A673 (cell line): ENCODE measurements at regions of chr3 and their contacts with region 1.

Region 1: GRCh38 chr3:129490242-129491045 is 38.0 kb upstream of the RHO start:
- DNase-seq: peak; percentile 87
- H3K4me3 ChIP-seq: no peak overlapping the region
- H3K27ac ChIP-seq: no peak overlapping the region
- H3K4me1 ChIP-seq: no peaks in the 10 kb centered on the region
- H3K27me3 ChIP-seq: no peaks in the 10 kb centered on the region
- CTCF ChIP-seq: peak; percentile 86

Region 2: GRCh38 chr3:129576514-129577352 is 86.3 kb after region 1 on chr3:
- CTCF ChIA-PET with region 1: no interaction called
- POLR2A ChIA-PET with region 1: interaction called, 10 read pairs
- intact Hi-C with region 1: no loop called
- DNase-seq: no peak
- H3K4me3 ChIP-seq: no peak overlapping the region
- H3K27ac ChIP-seq: no peak overlapping the region
- H3K4me1 ChIP-seq: no peaks in the 10 kb centered on the region
- H3K27me3 ChIP-seq: no peaks in the 10 kb centered on the region
- CTCF ChIP-seq: no peak

Region 3: DNA sequence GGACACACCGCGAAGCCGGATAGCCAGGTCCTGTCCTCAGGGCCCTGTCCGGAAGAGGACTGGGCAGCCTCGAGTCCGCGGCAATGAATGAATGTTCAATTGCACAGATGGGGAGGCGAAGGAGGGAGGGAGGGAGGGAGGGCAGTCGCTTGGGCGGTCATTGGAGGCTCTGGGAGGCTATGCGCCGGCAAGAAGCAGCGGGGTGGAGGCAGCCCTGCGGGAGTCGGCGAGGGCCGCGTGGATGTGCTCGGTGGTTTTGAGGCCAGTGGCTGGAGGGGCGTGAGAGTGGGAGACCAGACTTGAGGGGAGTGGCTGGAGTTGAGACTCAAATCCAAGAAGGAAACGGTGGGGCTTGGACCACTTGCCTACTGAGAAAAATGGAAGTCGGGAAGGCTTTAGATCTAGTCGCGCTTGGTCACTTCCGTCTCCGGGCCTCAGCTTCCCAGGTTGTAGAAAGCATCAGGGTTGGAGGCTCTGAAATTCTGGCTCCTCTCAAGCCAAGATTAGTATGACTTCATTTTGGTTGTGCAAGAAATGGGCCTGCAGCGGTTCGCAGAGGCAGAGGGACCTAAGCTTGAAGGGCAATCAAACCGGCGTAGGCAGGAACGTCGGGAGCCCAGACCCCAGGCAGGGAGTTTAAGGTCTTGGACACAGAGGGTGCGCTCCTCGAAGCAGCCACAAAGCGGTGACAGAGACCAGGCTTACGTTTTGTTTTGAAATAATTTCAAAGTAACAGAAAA is 137.2 kb after region 1 on chr3:
- CTCF ChIA-PET with region 1: interaction called, 5 read pairs
- POLR2A ChIA-PET with region 1: interaction called, 13 read pairs
- intact Hi-C with region 1: loop called (anchors 5 kb)
- DNase-seq: peak; percentile 91
- H3K4me3 ChIP-seq: peak overlapping the region; percentile 52
- H3K27ac ChIP-seq: peak overlapping the region; percentile 75
- H3K4me1 ChIP-seq: peaks cover 20% of the 10 kb centered on the region
- H3K27me3 ChIP-seq: no peaks in the 10 kb centered on the region
- CTCF ChIP-seq: peak; percentile 84

Region 4: DNA sequence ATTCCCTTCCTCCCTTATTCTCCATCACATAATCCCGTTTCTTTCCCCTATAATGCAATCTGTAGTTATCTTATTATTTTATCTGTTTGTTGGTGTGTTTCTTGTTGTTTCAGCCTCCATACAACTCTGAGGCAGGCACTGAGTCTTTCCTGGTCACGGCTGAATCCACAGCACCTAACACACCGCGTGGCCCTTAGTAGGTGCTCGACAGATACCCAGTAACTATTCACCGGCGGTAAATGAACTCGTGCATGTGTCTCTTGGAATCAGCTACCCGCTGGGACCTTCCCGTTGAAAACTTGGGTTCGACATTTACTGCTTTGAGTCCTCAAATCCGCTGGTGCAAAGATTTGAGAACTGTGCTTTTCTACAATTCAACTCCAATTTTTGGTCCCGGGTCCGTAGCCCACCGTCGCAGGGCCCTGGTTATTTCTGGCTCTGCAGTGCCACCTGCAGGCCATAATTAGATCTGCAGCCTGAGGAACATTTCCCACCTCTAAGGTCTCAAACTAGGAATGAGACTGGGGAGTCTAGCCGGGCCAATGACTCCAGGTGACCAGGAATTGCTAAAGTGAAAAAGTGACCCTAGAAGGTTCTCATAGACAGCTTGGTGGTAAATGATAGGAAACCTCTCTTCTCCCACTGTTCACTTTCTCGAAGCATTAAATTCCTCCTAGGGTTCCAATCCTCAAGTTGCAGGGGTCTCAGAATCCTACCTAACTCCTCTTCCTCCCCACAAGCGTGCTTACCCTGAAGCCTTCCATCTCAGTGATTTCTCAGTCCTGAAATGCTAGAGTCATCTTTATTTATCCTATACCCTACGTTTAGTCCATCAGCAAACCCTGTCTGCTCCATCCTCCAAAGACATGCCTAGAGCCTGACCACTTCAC is 444.0 kb after region 1 on chr3:
- CTCF ChIA-PET with region 1: interaction called, 4 read pairs
- POLR2A ChIA-PET with region 1: no interaction called
- intact Hi-C with region 1: loop called (anchors 2 kb)
- DNase-seq: peak; percentile 62
- H3K4me3 ChIP-seq: no peak overlapping the region
- H3K27ac ChIP-seq: no peak overlapping the region
- H3K4me1 ChIP-seq: peaks cover 16% of the 10 kb centered on the region
- H3K27me3 ChIP-seq: no peaks in the 10 kb centered on the region
- CTCF ChIP-seq: peak; percentile 95

Region 5: DNA sequence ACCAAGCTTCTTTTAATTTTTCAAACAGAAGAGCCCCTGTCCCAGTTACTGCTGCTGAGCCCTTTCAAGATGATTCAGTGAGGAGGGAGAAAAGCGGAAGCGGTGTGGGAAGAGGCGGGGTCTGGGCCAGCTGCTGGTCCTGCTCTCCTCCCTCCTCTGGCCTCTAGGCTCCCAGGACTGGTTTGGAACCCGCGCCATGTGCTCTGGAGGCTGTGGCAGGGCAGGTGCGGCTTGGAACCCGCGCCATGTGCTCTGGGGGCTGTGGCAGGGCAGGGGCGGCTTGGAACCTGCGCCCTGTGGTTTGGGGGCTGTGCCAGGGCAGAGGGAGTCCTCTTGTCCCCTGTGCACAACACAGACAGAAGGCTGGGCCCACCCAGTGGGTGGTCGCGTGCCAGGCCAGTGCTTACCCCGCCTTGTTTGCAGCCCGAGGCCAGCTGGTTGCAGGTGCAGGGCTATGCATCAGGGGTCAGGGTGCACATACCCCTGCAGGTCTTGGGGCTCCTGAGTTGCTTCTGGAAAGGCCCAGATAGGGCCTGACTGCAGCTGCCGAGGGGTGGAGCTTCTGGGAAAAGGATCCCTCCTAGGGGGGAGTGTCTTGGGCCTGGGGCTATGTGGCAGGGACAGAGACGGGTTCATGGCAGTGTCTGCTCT is 603.4 kb after region 1 on chr3:
- CTCF ChIA-PET with region 1: no interaction called
- POLR2A ChIA-PET with region 1: no interaction called
- intact Hi-C with region 1: loop called (anchors 10 kb)
- DNase-seq: no peak
- H3K4me3 ChIP-seq: no peak overlapping the region
- H3K27ac ChIP-seq: no peak overlapping the region
- H3K4me1 ChIP-seq: peaks cover 8% of the 10 kb centered on the region
- H3K27me3 ChIP-seq: no peaks in the 10 kb centered on the region
- CTCF ChIP-seq: no peak